ENCODE measurements at regions of chr15 and their contacts with region 1.

Region 1: GRCh38 chr15:61834076-61834697 is 226.1 kb downstream of the VPS13C start:
- DNase-seq: peak; percentile 87 to 90
- H3K4me3 ChIP-seq: no peak overlapping the region
- H3K27ac ChIP-seq: no peak overlapping the region
- H3K4me1 ChIP-seq: peaks cover 0 to 3% of the 10 kb centered on the region in 2 donors
- H3K27me3 ChIP-seq: no peaks in the 10 kb centered on the region
- CTCF ChIP-seq: peak; percentile 90 to 95 (median 94)
- POLR2A ChIP-seq: no peak

Region 2: GRCh38 chr15:61702224-61703020 is 131.8 kb before region 1 on chr15:
- intact Hi-C with region 1: loop called (anchors 10 kb)
- DNase-seq: no peak
- H3K4me3 ChIP-seq: no peak overlapping the region
- H3K27ac ChIP-seq: no peak overlapping the region
- H3K4me1 ChIP-seq: no peaks in the 10 kb centered on the region
- H3K27me3 ChIP-seq: no peaks in the 10 kb centered on the region
- CTCF ChIP-seq: peak in 4 of 6 experiments; percentile 24 to 46 (median 36)
- POLR2A ChIP-seq: no peak

Region 3: GRCh38 chr15:61906961-61907752 is 73.0 kb after region 1 on chr15:
- intact Hi-C with region 1: no loop called
- DNase-seq: no peak
- H3K4me3 ChIP-seq: no peak overlapping the region
- H3K27ac ChIP-seq: peak overlapping the region in 2 of 3 donors; percentile 1 to 9
- H3K4me1 ChIP-seq: peaks cover 0 to 9% of the 10 kb centered on the region in 2 donors
- H3K27me3 ChIP-seq: no peaks in the 10 kb centered on the region
- CTCF ChIP-seq: no peak
- POLR2A ChIP-seq: no peak

Measured in thyroid gland (tissue), 4 donors.